ENCODE measurements at regions of chr4 and their contacts with region 1.

Region 1: DNA sequence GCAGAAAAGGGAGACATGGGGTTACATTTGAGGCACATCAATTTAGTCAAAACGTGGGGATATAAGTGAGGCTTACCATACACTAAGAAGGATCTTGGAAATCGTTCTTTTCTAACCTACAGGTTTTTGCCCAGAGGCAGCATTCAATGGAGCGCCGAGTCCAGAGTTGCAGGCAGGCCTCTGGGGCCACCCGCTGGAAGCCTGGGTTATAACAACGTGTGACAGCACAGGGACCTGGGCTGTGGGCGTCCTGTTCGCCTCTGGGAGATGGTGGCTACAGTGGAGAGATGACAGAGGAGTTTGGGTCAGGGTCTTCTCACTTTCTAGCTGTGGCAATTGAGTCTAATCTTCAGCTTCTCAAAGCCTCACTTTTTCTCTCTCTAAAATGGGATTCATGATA is 53.9 kb downstream of the ENPP6 start:
- DNase-seq: peak; percentile 33
- H3K4me3 ChIP-seq: no peak overlapping the region
- H3K27ac ChIP-seq: no peak overlapping the region
- H3K4me1 ChIP-seq: no peaks in the 10 kb centered on the region
- H3K27me3 ChIP-seq: peaks cover 4% of the 10 kb centered on the region
- CTCF ChIP-seq: peak; percentile 42

Region 2: DNA sequence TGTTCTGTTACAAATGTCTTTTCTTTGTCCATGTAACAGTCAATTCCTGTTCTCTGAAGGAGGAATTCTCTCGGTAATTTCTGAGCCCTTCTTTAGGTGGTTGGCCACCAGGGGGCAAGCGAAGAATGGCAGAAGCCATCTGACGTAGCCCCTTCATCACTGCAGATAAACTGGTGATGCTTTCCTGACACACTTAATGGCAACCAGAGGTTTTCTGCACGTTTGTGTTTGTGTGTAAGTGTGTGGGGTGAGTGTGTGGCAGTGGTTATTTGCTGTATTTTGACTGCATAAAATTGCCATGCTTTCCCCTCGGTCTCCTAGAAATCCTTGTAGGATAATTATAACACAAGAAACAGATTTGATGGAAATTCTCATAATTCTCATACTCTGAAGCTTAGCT is 323.5 kb before region 1 on chr4:
- intact Hi-C with region 1: loop called (anchors 1 kb)
- DNase-seq: peak; percentile 75
- H3K4me3 ChIP-seq: no peak overlapping the region
- H3K27ac ChIP-seq: no peak overlapping the region
- H3K4me1 ChIP-seq: no peaks in the 10 kb centered on the region
- H3K27me3 ChIP-seq: no peaks in the 10 kb centered on the region
- CTCF ChIP-seq: peak; percentile 89

Region 3: DNA sequence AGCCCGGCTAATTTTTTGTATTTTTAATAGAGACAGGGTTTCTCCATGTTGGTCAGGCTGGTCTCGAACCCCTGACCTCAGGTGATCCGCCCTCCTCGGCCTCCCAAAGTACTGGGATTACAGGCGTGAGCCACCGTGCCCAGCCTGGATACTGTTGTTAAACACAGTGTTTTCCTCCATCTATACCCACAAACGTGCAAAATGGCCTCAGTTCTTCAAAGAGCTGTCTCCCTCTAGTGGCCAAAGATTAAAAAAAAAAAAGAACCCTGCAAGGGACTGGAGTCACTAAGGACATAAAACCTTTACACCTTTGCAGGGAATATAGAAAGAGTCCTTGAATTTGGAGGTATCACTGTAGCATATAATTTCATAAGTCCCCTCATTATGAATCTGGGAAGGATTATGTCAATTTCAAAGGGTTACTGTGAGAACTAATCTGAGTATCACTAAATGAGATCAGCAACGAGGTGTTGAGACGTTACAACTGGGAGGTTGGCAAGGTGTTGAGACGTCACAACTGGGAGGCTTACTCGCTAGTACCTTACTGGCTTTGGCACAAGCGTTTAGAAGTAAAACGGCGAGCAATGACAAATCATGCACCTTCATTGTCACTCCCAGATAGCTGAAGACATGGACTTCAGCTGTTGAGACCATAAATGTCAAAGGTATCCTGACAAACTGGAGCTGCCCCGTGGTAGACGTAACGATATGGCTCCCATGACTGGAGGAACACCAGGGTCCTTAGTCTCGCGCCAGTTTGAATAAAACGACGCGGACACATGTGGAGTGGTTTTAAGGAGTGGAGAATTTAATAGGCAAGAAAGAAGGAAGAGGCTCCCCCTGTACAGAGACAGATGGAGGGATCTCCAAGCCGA is 87.2 kb after region 1 on chr4:
- intact Hi-C with region 1: no loop called
- DNase-seq: no peak
- H3K4me3 ChIP-seq: no peak overlapping the region
- H3K27ac ChIP-seq: no peak overlapping the region
- H3K4me1 ChIP-seq: no peaks in the 10 kb centered on the region
- H3K27me3 ChIP-seq: no peaks in the 10 kb centered on the region
- CTCF ChIP-seq: peak; percentile 59